Activated naive CD8-positive, alpha-beta T cell treated with anti-CD3 and anti-CD28 coated beads, Interleukin-2, amount 10 ng/mL, durations not matched to agents 7 days and 5 days (primary cell): ENCODE measurements at regions of chr12 and their contacts with region 1.

Region 1: GRCh38 chr12:31325877-31326631 is at the start of gene SINHCAF:
- DNase-seq: peak; percentile 99
- ATAC-seq: peak; percentile 68
- H3K4me3 Mint-ChIP-seq: peak within 1 kb of the TSS; percentile 87
- H3K27ac Mint-ChIP-seq: peak within 1 kb of the TSS; percentile 98
- H3K4me1 Mint-ChIP-seq: peaks cover 24% of the 10 kb centered on the region
- H3K27me3 Mint-ChIP-seq: peaks cover 10% of the 10 kb centered on the region
- total RNA-seq, gene SINHCAF: 74.7 to 86.3 TPM

Region 2: DNA sequence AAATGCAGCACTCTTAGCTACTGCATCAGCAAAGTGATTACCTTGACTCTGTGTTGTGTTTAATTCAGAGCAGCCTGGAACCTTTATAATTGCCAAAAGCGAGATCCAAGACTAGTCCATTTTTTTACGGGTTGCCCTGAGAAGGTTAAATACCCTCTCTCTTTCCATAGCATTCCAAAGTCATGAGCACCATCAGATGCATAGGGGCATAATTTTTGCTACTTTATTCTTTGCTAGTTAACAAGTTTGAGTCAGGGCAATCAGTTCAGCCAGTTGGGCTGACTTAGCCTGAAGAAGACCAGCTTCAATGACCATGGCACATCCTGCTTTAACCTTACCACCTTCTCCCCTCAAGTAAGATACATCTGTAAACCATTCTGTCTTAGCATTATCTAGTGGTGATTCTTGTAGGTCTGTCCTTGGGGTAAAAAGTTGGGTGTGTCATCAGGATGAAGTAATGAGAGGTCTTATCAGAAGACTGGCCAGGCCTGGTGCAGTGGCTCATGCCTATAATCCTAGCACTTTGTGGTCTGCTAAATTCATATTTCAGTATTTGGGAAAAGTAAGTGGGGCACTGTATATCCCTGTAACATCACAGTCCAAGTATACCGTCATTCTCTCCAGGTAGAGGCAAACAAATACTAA is 19.3 kb before region 1 on chr12:
- POLR2A ChIA-PET with region 1: no interaction called
- DNase-seq: no peak
- ATAC-seq: no peak
- H3K4me3 Mint-ChIP-seq: no peak overlapping the region
- H3K27ac Mint-ChIP-seq: no peak overlapping the region
- H3K4me1 Mint-ChIP-seq: peaks cover 12% of the 10 kb centered on the region
- H3K27me3 Mint-ChIP-seq: no peaks in the 10 kb centered on the region

Region 3: DNA sequence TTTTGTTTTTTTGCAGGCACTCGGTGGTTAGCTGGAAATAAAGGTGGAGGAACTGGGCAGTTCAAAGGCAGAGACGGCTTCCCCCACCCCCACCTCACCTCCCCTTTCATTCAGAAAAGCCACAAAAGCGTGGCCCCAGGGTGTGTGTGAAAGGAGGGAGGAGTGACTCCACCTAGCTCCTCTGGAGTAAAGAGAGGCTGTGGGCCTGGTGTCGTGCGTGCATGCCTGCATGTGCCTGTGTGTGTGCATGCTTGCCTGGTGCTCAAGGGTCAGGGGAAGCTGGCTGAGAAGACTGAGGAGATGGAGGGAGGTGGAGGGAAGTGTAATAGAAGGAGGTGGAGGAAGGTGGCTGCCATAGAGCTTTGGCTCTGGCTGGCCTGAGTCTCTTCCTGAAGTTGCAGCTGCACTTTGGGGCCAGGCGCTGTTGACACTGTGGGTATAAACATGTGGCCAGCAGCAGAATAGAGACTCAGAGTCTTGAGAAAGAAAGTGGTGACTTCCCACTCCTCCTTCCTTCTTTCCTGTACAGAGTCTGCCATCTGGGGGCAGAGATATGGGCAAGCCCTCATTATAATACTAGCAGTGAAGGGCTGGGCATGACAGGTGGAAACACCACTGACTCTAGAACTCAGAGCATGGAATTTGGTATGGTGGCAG is 36.8 kb after region 1 on chr12:
- POLR2A ChIA-PET with region 1: interaction called, 19 read pairs
- DNase-seq: peak; percentile 63
- ATAC-seq: peak; percentile 87
- H3K4me3 Mint-ChIP-seq: peak overlapping the region; percentile 81
- H3K27ac Mint-ChIP-seq: peak overlapping the region; percentile 97
- H3K4me1 Mint-ChIP-seq: peaks cover 21% of the 10 kb centered on the region
- H3K27me3 Mint-ChIP-seq: peaks cover 2% of the 10 kb centered on the region

Region 4: GRCh38 chr12:31456562-31456961 is 130.5 kb after region 1 on chr12:
- POLR2A ChIA-PET with region 1: no interaction called
- DNase-seq: no peak
- ATAC-seq: no peak
- H3K4me3 Mint-ChIP-seq: no peak overlapping the region
- H3K27ac Mint-ChIP-seq: no peak overlapping the region
- H3K4me1 Mint-ChIP-seq: no peaks in the 10 kb centered on the region
- H3K27me3 Mint-ChIP-seq: peaks cover 2% of the 10 kb centered on the region